ENCODE measurements at regions of chr17 and their contacts with region 1.

Region 1: GRCh38 chr17:7004398-7005253 is 7.8 kb upstream of the RNASEK start:
- DNase-seq: no peak
- ATAC-seq: peak; percentile 78
- H3K4me3 Mint-ChIP-seq: no peak overlapping the region
- H3K27ac Mint-ChIP-seq: no peak overlapping the region
- H3K4me1 Mint-ChIP-seq: no peaks in the 10 kb centered on the region
- H3K27me3 Mint-ChIP-seq: no peaks in the 10 kb centered on the region
- CTCF ChIP-seq: peak; percentile 62

Region 2: GRCh38 chr17:6713130-6713917 is 291.3 kb before region 1 on chr17 and contains the start of gene SLC13A5:
- CTCF ChIA-PET with region 1: interaction called, 14 read pairs
- POLR2A ChIA-PET with region 1: no interaction called
- DNase-seq: peak; percentile 87
- ATAC-seq: peak; percentile 90
- H3K4me3 Mint-ChIP-seq: peak within 1 kb of the TSS; percentile 92
- H3K27ac Mint-ChIP-seq: no peak within 1 kb of the TSS
- H3K4me1 Mint-ChIP-seq: peaks cover 21% of the 10 kb centered on the region
- H3K27me3 Mint-ChIP-seq: peaks cover 63% of the 10 kb centered on the region
- CTCF ChIP-seq: peak; percentile 29; the same call in 1 of the 2 replicates
- total RNA-seq, gene SLC13A5: 1.6 to 2.3 TPM (median 1.8 TPM) in 3 replicates

Region 3: GRCh38 chr17:6853764-6854442 is 150.7 kb before region 1 on chr17:
- CTCF ChIA-PET with region 1: interaction called, 11 read pairs
- POLR2A ChIA-PET with region 1: no interaction called
- DNase-seq: peak; percentile 64
- ATAC-seq: peak; percentile 97
- H3K4me3 Mint-ChIP-seq: peak overlapping the region; percentile 78
- H3K27ac Mint-ChIP-seq: peak overlapping the region; percentile 66
- H3K4me1 Mint-ChIP-seq: peaks cover 23% of the 10 kb centered on the region
- H3K27me3 Mint-ChIP-seq: peaks cover 14% of the 10 kb centered on the region
- CTCF ChIP-seq: peak; percentile 72

Region 4: DNA sequence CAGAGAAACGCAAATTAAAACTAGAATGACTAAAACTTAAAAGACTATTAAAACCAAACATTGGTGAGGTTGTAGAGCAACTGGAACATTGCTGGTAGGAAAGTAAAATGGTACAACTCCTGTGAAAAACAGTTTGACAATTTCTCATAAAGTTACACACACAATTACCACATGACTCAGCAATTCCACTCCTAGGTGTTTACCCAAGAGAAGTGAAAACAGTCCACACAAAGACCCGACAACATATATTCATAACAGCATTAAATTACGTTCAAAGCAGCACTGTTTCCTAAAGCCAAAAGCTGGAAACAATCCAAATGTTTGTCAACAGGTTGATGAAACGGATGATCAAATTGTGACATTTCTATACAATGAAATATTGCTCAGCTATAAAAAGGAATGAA is 35.3 kb before region 1 on chr17:
- CTCF ChIA-PET with region 1: no interaction called
- POLR2A ChIA-PET with region 1: no interaction called
- DNase-seq: no peak
- ATAC-seq: no peak
- H3K4me3 Mint-ChIP-seq: no peak overlapping the region
- H3K27ac Mint-ChIP-seq: no peak overlapping the region
- H3K4me1 Mint-ChIP-seq: no peaks in the 10 kb centered on the region
- H3K27me3 Mint-ChIP-seq: peaks cover 15% of the 10 kb centered on the region
- CTCF ChIP-seq: no peak

Region 5: GRCh38 chr17:7021993-7022778 is 17.6 kb after region 1 on chr17:
- CTCF ChIA-PET with region 1: interaction called, 15 read pairs
- POLR2A ChIA-PET with region 1: no interaction called
- DNase-seq: peak; percentile 90
- ATAC-seq: peak; percentile 63
- H3K4me3 Mint-ChIP-seq: peak overlapping the region; percentile 91
- H3K27ac Mint-ChIP-seq: peak overlapping the region; percentile 93
- H3K4me1 Mint-ChIP-seq: peaks cover 51% of the 10 kb centered on the region
- H3K27me3 Mint-ChIP-seq: peaks cover 44% of the 10 kb centered on the region
- CTCF ChIP-seq: peak; percentile 88